Dorsolateral prefrontal cortex (tissue), 120 donors: ENCODE measurements at regions of chr1 and their contacts with region 1.

Region 1: GRCh38 chr1:27469334-27469733 is 20.6 kb downstream of the WASF2 start:
- DNase-seq: no peak
- H3K4me3 ChIP-seq: no peak overlapping the region
- H3K27ac ChIP-seq: no peak overlapping the region
- H3K27me3 ChIP-seq: no peaks in the 10 kb centered on the region
- CTCF ChIP-seq: no peak

Region 2: GRCh38 chr1:27430903-27431600 is 38.3 kb before region 1 on chr1:
- intact Hi-C with region 1: no loop called
- DNase-seq: peak in 1 of 10 donors; percentile 64
- H3K4me3 ChIP-seq: peak overlapping the region in 26 of 59 donors; percentile 1 to 38 (median 12)
- H3K27ac ChIP-seq: peak overlapping the region; percentile 49 to 97 (median 90)
- H3K27me3 ChIP-seq: no peaks in the 10 kb centered on the region
- CTCF ChIP-seq: peak in 6 of 56 donors; percentile 4 to 25 (median 12)

Region 3: DNA sequence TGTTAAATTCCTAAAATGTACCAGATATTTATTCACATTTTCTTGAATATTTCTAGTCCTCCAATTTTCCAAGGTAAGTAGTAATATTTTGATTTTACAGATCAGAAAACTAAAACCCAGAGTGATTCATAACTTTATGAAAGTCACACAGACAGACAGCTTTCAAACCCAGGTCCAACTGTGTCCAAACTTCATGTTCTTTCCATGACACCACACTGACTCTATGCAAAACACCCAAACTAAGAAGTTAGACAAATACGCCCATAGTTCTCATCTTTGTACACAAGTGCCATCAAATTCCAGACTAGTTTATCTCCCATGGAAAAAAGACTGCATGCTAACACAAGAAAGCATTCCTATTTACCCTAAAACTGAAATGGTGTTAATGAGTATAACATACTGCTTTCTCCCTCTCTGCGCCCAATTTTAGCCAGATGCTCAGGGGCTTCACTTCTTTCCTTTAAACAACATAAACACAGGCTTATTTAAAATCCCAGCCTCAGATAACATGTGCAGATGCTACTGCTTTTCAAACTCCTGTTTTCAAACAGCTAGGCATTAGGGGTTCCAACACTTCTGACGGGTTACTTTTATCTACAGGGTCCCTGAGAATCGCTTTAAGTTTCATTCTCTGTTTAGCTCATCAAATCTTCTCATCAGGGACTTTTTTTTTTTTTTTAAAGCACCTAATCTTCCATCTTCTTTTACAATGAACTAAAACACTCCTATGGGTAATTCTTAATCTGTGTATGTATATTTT is 24.0 kb before region 1 on chr1:
- intact Hi-C with region 1: loop called in 1 of 2 experiments (anchors 2 kb)
- DNase-seq: no peak
- H3K4me3 ChIP-seq: no peak overlapping the region
- H3K27ac ChIP-seq: peak overlapping the region in 7 of 59 donors; percentile 13 to 54 (median 21)
- H3K27me3 ChIP-seq: no peaks in the 10 kb centered on the region
- CTCF ChIP-seq: no peak

Region 4: DNA sequence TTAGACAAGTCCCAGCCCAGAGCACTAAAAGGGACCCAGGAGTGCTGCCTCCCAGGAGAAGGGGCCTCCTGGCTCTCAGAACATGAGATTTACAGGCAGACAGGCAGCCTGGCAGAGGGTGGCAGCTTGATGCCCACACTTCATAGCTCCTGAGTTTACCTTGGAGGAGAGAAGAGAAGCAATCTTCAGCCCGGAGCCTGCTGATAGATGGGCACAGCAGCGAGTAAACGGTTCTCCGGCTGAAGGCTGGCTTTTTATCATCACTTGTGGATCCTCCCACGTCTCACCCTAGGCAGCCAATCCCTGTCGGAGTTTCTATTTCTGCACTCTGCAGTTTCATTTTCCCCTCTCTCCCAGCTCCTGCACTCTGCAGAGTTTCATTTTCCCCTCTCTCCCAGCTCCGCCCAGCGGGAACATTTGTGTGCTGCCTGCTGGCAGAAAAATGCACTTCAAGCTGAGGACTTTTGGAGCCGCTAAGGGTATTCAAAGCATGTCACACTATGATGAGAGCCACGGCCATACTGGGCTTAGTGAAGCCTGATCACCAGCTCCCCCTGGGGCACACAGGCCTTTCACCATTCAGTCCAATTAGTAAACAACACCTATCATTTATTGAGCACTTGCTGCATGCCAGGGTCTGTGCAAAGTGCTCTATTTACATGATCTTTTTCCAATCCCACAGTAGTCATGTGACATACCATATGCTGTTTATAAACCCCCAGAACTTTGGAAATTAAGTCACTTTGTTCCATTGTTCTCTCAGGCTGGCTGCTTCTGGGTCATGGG is 202.8 kb after region 1 on chr1 and contains the start of gene IFI6:
- intact Hi-C with region 1: no loop called
- DNase-seq: peak; percentile 53 to 96 (median 88)
- H3K4me3 ChIP-seq: peak within 1 kb of the TSS; percentile 37 to 90 (median 67)
- H3K27ac ChIP-seq: peak within 1 kb of the TSS; percentile 77 to 99 (median 92)
- H3K27me3 ChIP-seq: no peaks in the 10 kb centered on the region
- CTCF ChIP-seq: peak in 53 of 56 donors; percentile 16 to 71 (median 52)
- total RNA-seq, gene IFI6: 51.8 to 1,534 (median 96.2) TPM